ENCODE measurements at regions of chr11 and their contacts with region 1.

Region 1: DNA sequence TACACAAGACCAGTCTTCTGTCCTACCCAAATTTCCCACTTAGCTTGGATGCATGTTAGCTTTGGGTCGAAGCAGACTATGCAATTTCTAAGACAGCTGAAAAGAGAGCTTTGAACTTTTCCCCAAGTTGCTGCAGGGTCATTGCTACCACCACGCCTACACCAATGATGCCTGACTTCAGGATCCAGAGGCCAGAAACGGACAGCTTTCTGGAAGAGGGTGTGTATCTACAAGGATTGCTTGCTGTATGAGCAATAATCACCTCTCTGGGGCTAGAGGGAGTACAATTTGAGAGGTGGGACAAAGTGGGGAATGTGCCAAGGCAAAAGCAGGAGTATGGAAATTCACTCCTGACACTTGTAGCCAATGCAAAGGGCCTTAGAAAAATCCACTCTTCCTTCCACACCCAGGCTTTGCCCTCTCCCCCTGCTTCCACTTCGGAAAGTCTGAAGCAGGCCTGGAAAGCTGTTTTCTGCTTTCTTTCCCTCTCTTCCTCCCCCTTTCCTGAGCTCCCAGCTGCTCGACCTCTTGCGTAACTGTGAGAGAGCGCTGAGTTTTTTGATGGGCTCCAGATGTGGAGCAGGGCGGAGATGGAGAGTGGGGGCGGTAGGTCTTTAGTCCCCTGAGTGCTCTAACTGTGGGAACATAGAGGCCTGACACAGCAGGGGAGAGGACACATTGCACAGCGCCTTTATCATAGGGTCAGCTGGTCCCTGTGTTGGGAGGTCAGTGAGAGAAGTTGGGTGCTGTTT is 2.1 kb upstream of the PHLDB1 start:
- DNase-seq: peak; percentile 87
- H3K4me3 ChIP-seq: no peak overlapping the region
- H3K27me3 ChIP-seq: no peaks in the 10 kb centered on the region
- CTCF ChIP-seq: no peak

Region 2: DNA sequence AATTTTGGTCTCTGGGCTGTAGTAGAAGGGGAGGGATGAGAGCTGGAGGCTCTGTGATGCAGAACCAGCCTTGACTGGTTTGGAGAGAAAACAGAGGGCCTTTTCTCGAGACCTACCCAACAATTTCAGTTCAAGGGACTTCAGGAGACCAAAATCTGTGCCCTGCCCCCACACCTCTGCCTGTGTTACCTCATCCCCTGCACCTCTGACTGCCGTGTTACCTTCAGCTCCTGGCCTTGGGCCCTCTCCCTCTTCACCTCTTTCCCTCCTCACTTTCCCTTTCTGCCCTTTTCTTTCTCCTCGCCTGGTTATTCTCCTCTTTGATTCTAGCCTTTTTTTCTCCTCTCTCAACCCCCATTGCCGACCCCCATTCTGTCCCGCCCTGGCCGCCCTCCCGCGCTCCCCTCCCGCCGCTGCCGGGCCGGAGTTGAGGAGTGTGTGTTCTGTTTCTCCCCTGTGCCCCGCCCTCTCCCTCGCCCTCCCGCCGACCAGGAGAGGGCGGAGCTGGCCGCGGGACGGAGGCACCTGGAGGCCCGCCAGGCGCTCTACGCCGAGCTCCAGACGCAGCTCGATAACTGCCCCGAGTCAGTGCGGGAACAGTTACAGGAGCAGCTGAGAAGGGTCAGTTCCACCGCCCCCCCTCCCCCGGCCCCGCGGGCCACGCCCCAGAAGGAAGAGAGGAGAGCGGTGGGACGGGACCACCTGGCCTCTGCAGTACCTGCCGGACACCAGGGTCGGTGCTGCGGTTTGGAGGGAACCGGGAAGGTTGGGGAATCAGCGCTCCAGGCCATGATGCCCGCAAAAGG is 29.3 kb after region 1 on chr11:
- CTCF ChIA-PET with region 1: interaction called, 18 read pairs
- POLR2A ChIA-PET with region 1: no interaction called
- DNase-seq: no peak
- H3K4me3 ChIP-seq: no peak overlapping the region
- H3K27me3 ChIP-seq: no peaks in the 10 kb centered on the region
- CTCF ChIP-seq: peak; percentile 32; the same call in 1 of the 2 replicates

Region 3: GRCh38 chr11:118838905-118839553 is 233.7 kb after region 1 on chr11:
- CTCF ChIA-PET with region 1: no interaction called
- POLR2A ChIA-PET with region 1: no interaction called
- DNase-seq: no peak
- H3K4me3 ChIP-seq: no peak overlapping the region
- H3K27me3 ChIP-seq: no peaks in the 10 kb centered on the region
- CTCF ChIP-seq: no peak

Region 4: DNA sequence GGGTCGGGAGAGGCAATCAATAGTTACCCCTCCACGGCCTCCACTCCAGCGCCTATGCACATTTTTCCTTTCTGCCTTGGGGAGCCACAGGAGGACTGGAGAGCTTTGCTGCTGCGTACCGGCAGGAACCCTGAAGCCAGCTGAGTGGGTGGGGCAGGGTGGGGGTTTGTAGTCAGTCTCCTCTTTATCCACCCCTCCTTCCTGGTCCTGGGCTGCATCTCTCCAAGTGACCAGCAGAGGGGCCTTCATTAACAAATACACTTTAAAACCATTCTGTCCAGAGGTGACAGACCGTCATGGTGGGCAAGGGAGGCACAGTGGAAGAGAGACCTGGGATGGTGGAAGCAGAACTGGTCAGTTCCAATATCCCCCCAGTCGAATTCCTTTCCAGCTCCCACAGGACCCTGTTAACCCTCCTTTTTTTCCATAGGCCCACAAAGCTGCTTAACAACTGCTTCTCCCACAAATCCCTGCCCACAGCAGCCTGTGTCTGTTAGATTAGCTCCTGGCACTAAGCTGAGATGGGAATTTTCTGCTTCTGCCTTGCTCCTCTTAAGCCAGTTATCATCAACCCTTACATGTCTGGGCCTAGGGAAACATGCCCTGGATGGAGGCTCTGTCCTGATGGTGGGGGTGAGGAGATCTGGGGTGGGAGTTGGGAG is 539.7 kb after region 1 on chr11:
- CTCF ChIA-PET with region 1: no interaction called
- POLR2A ChIA-PET with region 1: no interaction called
- DNase-seq: peak; percentile 16
- H3K4me3 ChIP-seq: no peak overlapping the region
- H3K27me3 ChIP-seq: peaks cover 3% of the 10 kb centered on the region; the same call in 1 of the 2 replicates
- CTCF ChIP-seq: peak; percentile 83

Measured in BJ (cell line).